ENCODE measurements at regions of chr5 and their contacts with region 1.

Region 1: DNA sequence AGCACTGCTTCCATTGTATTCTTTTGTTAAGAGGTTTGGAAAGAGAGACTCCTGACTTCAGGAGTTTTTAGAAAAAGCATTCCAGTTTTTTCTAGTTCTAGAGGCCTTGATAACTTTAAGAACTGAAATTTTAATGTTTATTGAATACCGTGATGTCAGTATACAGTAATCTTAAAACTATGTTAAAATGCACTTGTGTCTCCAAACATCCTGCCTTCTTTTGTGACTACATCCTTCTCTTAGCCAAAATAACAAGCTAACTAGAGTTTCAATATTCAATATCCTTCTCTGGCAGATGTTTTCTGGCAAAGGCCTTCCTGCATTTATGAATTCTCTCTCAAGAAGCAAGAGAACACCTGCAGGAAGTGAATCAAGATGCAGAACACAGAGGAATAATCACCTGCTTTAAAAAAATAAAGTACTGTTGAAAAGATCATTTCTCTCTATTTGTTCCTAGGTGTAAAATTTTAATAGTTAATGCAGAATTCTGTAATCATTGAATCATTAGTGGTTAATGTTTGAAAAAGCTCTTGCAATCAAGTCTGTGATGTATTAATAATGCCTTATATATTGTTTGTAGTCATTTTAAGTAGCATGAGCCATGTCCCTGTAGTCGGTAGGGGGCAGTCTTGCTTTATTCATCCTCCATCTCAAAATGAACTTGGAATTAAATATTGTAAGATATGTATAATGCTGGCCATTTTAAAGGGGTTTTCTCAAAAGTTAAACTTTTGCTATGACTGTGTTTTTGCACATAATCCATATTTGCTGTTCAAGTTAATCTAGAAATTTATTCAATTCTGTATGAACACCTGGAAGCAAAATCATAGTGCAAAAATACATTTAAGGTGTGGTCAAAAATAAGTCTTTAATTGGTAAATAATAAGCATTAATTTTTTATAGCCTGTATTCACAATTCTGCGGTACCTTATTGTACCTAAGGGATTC is 43.1 kb downstream of the NDFIP1 start:
- DNase-seq: peak in 3 of 10 donors; percentile 26 to 35 (median 32)

Region 2: GRCh38 chr5:142324871-142325724 is 173.4 kb after region 1 on chr5 and contains the start of gene SPRY4:
- intact Hi-C with region 1: loop called (anchors 10 kb)
- DNase-seq: peak; percentile 75 to 98 (median 90)

Region 3: DNA sequence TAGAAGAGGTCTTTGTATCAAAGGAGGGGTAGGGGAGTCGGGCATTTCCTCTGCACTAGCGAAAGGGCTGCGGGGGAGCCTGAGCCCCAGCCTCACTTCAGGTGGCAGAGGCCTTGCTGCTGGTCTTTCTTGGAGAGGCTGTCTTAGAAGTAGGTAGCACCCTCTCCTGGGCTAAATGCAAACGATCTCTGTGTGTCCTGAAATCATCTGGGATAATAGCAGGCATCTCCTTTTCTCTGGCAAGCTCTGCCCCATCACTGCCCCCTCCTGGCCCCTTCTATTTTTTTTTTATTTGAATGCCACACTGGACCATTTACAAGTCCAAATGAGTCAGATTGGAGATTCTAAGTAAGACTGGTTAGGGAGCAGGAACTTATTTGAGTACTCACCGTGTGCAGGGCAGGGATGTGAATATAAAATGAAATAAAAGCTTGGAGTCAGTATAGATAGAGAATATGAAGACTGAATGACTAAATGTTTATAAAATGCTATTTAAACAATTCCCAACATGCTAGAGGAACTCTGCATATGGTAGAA is 397.1 kb after region 1 on chr5:
- intact Hi-C with region 1: loop called (anchors 2 kb)
- DNase-seq: peak in 5 of 10 donors; percentile 12 to 85 (median 36)

Region 4: DNA sequence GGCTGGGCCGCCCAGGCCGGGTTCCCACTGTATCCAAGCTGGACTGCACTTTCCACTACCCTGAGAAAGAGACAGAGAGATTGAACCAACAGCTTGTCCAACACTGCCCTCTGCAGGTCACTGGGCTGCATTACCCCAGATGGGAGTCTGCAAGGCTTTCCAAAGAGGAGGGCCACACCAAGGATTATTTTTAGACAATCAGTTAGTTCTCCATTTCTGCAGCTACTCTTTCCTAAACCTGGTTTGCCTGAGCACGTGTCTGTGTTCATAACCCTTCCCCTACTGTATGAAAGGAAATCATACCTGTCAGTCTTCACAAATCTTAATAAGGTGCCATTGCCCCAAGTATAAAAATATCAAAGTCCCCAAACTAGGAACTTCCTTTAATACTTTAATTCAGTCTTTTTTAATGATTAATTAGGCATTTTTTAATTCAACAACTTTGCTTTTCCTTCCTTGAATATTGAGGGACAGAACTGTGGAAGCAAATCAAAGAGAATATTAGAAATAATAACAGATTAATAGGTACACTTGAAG is 547.5 kb after region 1 on chr5:
- intact Hi-C with region 1: loop called (anchors 5 kb)
- DNase-seq: peak; percentile 77 to 97 (median 92)

Region 5: DNA sequence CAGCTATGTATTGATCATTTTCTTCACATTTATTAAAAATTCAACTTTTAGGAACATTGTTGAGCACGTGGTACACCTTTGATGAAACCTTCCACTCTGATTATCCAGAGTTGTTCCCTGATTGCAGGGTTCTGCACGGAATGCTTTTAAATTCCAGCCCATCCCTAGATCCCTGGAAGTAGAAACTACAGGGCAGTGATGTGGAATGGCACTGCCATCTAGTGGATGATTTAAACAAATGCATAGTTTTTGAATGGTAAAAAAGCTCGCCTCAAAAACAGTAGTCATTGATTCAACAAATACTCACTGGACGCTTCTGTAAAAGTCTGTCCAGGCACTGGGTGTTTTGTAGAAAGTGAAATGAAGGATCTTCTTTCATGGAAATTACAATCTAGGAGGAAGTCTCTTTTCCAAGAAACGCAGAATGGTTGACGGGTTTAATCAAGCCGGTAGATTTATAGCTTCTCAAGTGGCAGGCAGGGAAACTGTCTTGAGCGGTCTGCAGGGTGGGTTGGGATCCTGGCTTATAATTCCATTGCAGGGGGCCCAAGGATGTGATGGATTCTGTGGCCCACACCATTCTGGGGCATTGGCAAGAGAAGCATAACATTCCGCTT is 736.9 kb after region 1 on chr5:
- intact Hi-C with region 1: loop called (anchors 10 kb)
- DNase-seq: peak in 1 of 10 donors; percentile 38